Caco-2 (cell line): ENCODE measurements at regions of chr7 and their contacts with region 1.

Region 1: DNA sequence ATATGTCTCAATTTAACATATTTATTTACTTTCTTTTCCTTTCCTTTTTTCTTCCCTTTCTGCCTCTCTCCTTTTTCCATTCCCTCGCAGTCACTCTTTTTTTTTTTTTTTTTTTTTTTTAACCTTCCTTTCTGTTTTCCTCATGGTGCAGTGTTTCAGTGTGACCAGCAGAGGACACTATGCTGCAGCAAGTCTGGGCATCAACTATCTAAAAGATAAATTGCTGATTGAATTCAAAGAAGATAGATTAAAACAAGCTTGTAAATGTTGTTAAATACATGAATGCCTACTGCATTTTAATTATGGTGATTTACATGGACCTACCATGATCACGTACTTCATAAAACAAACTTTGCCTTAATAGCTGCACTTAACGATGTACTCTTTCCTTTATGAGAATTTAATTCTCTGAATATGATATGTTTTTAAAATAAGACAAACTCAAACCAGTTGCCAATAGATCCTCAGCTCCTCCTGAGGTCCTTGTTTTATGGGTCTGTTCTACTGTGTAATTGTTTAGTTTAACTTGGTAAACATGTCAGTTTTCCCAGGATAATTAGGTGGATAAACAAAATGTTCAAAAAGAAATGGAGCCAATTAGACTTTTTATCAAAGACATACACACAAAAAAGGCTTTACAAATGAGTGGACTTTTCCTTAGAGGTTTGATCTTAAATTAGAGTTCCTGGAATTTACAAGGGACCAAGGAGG is 101.0 kb upstream of the AGR3 start:
- DNase-seq: peak in 1 of 2 experiments; percentile 38
- H3K4me3 ChIP-seq: no peak overlapping the region
- H3K4me3 Mint-ChIP-seq: no peak overlapping the region
- H3K27ac Mint-ChIP-seq: peak overlapping the region; percentile 65
- H3K4me1 ChIP-seq: no peaks in the 10 kb centered on the region
- H3K4me1 Mint-ChIP-seq: peaks cover 17% of the 10 kb centered on the region
- H3K27me3 ChIP-seq: no peaks in the 10 kb centered on the region
- H3K27me3 Mint-ChIP-seq: no peaks in the 10 kb centered on the region
- CTCF ChIP-seq: peak; percentile 90 to 96

Region 2: GRCh38 chr7:16891338-16891737 is 91.5 kb before region 1 on chr7:
- CTCF ChIA-PET with region 1: interaction called, 4 read pairs
- POLR2A ChIA-PET with region 1: no interaction called
- intact Hi-C with region 1: loop called (anchors 2 kb)
- DNase-seq: peak; percentile 64 to 74
- H3K4me3 ChIP-seq: no peak overlapping the region
- H3K4me3 Mint-ChIP-seq: no peak overlapping the region
- H3K27ac Mint-ChIP-seq: peak overlapping the region; percentile 35
- H3K4me1 ChIP-seq: peaks cover 31% of the 10 kb centered on the region
- H3K4me1 Mint-ChIP-seq: peaks cover 14% of the 10 kb centered on the region
- H3K27me3 ChIP-seq: no peaks in the 10 kb centered on the region
- H3K27me3 Mint-ChIP-seq: no peaks in the 10 kb centered on the region
- CTCF ChIP-seq: peak; percentile 46 to 75

Region 3: DNA sequence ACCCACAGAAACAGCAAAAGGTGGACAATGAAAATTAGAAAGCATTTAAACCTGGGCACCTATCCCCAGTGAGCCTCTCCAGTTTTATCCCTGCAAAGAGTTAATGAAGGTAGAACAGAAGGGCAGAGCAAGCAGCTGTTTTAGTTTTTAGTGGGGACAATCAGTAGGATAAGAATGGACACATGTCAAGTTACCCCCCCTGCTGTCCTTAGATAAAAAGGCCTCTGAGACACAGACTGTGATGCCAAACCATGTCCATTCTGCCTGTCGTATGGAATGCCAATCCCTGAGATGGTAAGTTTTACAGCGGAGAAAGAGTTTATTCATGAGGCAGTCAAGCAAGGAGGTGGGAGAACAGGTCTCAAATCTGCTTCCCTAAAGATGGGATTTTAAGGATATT is 61.6 kb after region 1 on chr7:
- CTCF ChIA-PET with region 1: no interaction called
- POLR2A ChIA-PET with region 1: no interaction called
- intact Hi-C with region 1: loop called (anchors 2 kb)
- DNase-seq: no peak
- H3K4me3 ChIP-seq: no peak overlapping the region
- H3K4me3 Mint-ChIP-seq: no peak overlapping the region
- H3K27ac Mint-ChIP-seq: no peak overlapping the region
- H3K4me1 ChIP-seq: peaks cover 2% of the 10 kb centered on the region
- H3K4me1 Mint-ChIP-seq: peaks cover 6% of the 10 kb centered on the region
- H3K27me3 ChIP-seq: no peaks in the 10 kb centered on the region
- H3K27me3 Mint-ChIP-seq: no peaks in the 10 kb centered on the region
- CTCF ChIP-seq: no peak

Region 4: DNA sequence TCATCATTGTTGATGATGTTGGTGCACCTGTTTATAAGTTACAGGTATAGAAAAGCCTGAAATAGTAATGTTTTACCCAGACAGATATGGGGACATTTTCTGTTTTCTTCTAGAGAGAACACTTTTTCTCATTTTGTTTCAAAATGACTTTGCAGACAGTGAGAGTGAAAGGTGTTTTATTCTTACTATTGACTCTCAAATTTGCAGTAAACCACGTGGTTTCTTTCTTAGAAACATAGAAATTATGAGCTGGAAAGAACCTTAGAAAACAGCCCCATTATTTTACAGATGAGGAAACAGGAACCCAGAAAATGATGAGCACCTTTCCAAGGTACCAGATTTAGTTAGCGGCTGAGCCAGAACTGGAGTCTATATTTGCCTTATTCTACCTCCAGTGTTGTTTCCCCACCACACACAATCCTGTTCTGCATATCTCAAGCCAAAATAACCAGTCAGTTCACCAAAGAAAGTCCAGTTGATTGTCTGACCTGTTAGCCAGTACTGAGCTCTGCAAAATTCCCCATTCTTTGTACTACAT is 176.8 kb after region 1 on chr7:
- CTCF ChIA-PET with region 1: no interaction called
- POLR2A ChIA-PET with region 1: no interaction called
- intact Hi-C with region 1: loop called (anchors 1 kb)
- DNase-seq: no peak
- H3K4me3 ChIP-seq: no peak overlapping the region
- H3K4me3 Mint-ChIP-seq: no peak overlapping the region
- H3K27ac Mint-ChIP-seq: no peak overlapping the region
- H3K4me1 ChIP-seq: no peaks in the 10 kb centered on the region
- H3K4me1 Mint-ChIP-seq: no peaks in the 10 kb centered on the region
- H3K27me3 ChIP-seq: no peaks in the 10 kb centered on the region
- H3K27me3 Mint-ChIP-seq: no peaks in the 10 kb centered on the region
- CTCF ChIP-seq: no peak

Region 5: DNA sequence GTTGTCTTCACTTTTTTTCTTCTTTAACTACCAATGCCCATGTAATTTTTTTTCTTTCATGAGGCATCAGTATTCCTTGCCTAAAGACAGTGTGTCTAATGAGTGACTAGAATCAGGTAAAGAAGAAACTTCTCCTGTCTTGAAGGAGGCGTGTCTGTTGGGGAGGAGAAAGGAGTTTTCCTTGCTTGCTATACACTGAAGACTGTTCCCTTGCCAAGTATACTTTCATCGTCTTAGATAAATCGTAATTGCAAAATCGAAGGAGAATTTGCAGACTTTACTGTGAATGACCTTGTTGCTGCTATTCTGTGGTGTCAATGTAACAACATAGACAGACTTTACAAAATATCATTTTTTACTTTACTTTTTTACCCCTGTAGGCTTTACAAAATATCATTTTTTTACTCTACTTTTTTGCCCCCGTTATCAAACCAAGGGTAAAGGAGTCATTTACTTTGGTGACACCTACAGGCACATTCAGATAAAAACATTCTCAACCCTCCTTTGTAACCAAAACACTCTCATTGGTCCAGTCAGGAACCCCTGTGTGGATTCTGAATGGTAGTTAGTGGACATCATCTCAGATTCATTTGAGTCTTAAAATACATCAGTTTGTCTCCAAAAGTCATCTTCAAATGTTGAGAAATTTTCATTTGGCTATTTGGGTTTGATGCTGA is 548.1 kb after region 1 on chr7:
- CTCF ChIA-PET with region 1: no interaction called
- POLR2A ChIA-PET with region 1: no interaction called
- intact Hi-C with region 1: loop called (anchors 2 kb)
- DNase-seq: no peak
- H3K4me3 ChIP-seq: no peak overlapping the region
- H3K4me3 Mint-ChIP-seq: no peak overlapping the region
- H3K27ac Mint-ChIP-seq: no peak overlapping the region
- H3K4me1 ChIP-seq: no peaks in the 10 kb centered on the region
- H3K4me1 Mint-ChIP-seq: no peaks in the 10 kb centered on the region
- H3K27me3 ChIP-seq: no peaks in the 10 kb centered on the region
- H3K27me3 Mint-ChIP-seq: no peaks in the 10 kb centered on the region
- CTCF ChIP-seq: peak in 1 of 2 experiments; percentile 29